GM13977 (cell line): ENCODE measurements at regions of chr19 and their contacts with region 1.

Region 1: GRCh38 chr19:13277104-13277809 is 127.0 kb downstream of the IER2 start:
- DNase-seq: peak; percentile 76
- CTCF ChIP-seq: peak; percentile 50

Region 2: GRCh38 chr19:13089139-13089856 is 188.0 kb before region 1 on chr19:
- in situ Hi-C with region 1: no loop called
- DNase-seq: peak; percentile 62
- CTCF ChIP-seq: peak; percentile 16

Region 3: DNA sequence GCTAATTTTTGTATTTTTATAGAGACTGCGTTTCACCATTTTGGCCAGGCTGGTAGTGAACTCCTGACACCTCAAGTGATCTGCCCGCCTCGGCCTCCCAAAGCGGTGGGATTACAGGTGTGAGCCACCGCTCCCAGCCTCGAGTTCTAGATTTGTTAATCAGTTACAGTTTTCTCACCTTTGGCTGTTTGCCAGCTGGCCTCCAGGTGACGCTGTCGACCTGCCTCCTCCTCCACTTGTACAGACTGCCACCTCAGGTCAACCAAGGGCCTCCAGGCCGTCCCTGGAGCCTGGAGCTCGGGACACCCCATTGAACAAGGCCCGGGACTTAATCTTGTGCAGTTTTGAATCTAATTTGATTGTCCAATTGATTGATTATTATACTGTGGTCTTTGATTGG is 81.6 kb before region 1 on chr19:
- in situ Hi-C with region 1: no loop called
- DNase-seq: peak; percentile 65
- CTCF ChIP-seq: peak; percentile 78

Region 4: GRCh38 chr19:13241231-13242104 is 35.8 kb before region 1 on chr19:
- in situ Hi-C with region 1: no loop called
- DNase-seq: peak; percentile 42
- CTCF ChIP-seq: peak; percentile 36

Region 5: GRCh38 chr19:13428336-13428735 is 151.1 kb after region 1 on chr19:
- in situ Hi-C with region 1: loop called (anchors 10 kb)
- DNase-seq: peak; percentile 17
- CTCF ChIP-seq: peak; percentile 47

Region 6: GRCh38 chr19:13597640-13598039 is 320.4 kb after region 1 on chr19:
- in situ Hi-C with region 1: loop called (anchors 10 kb)
- DNase-seq: peak; percentile 91
- CTCF ChIP-seq: peak; percentile 57